H1 (cell line): ENCODE measurements at regions of chr1 and their contacts with region 1.

Region 1: DNA sequence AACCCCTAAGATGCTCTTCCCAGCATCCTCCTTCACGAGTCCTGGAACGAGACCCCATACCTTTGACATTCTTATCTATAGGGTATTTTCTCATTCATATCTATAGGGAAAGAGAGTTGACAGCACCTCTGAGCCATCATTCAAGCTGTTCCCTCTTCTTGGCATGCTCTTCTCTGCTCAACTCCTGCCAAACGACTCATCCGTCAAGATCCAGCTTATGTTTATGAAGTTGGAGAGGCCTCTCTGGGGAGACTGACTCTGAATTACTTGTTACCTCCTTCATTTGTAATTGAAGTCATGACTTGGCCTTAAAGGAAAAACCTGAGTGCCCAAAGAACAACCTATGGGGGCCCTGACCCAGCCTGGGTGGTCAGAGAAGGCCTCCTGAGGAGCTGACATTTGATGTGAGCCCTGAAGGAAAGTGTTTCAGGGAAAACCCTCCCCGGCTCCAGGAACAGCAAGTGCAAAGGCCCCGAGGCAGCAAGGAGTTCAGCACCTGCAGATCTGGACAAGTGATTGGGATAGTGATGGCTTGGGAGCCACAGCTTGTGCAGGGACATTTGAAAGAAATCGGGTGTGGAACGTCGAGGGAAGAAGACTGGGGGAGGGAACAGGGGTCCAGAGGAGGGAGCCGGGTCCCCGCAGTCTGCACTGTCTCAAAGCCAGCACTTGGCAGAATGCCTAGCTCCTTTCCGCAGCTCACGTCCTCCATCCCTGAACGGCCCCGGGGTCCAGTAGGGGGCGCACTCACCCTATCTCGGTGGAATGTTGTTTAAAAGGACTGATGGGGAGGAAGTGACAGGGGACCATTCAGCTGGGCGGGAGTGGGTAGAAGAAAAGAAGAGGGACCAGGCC is 14.0 kb upstream of the CDA start:
- DNase-seq: peak; percentile 72 to 99
- H3K4me3 ChIP-seq: no peak overlapping the region
- H3K27ac ChIP-seq: no peak overlapping the region
- H3K4me1 ChIP-seq: peaks cover 0 to 2% (median 0%) of the 10 kb centered on the region in 4 experiments; a peak in 2 of 7 replicates
- H3K27me3 ChIP-seq: peaks cover 0 to 6% (median 0%) of the 10 kb centered on the region in 4 experiments; a peak in 1 of 7 replicates
- CTCF ChIP-seq: peak; percentile 87 to 94 (median 91)
- EP300 ChIP-seq: no peak; a peak in 1 of 3 replicates
- POLR2A ChIP-seq: no peak
- RAD21 ChIP-seq: peak; percentile 92 to 95

Region 2: DNA sequence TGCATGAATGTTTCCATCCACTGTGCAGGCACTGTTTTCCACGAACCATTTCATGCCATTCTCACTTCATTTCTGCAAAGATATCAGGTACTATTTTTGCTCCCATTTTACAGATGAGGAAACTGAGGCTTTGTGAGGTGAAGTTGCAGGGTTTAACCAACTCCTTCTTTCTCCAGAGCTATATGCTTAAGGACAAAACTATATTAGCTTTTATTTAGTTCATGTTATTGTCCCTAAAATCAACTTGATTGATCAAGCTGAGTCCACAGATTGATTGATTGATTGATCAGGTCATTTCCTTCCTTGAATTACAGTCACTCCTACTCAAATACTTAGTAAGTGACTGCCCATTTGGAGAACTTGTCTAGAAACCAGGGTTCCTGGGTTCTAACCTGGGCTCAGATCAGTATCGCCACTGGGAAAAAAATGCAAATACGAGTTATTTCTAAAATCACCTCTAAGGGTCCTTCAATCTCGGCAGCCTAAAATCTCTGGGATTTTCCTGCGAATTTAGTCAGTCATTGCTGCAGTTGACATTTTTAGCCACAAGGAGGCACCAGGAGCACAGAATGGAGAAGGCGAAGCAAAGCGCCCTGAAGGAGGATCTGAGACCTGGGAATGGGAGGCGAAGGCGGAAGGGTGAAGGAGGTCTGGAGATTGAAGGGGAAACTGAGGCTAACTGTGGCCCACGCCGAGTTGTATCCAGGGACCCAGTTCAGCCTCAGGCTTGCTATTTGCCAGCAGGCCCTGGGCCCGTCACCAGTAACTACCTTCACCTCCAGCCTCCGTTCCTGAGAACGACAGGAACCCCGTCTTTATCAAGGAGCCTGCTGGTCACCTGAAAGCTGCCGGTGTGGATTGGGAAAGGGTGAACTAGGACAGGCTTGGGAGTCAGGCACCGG is 52.7 kb before region 1 on chr1:
- CTCF ChIA-PET with region 1: interaction called, 16 read pairs
- POLR2A ChIA-PET with region 1: no interaction called
- DNase-seq: peak; percentile 46 to 94
- H3K4me3 ChIP-seq: 0 out of 8 replicates have a peak overlapping the region, but pooled peaks of 1 of the 4 experiments have one; percentile 14
- H3K27ac ChIP-seq: no peak overlapping the region
- H3K4me1 ChIP-seq: peaks cover 0 to 1% (median 0%) of the 10 kb centered on the region in 4 experiments; a peak in 1 of 7 replicates
- H3K27me3 ChIP-seq: no peaks in the 10 kb centered on the region; a peak in 1 of 7 replicates
- CTCF ChIP-seq: peak; percentile 67 to 94 (median 92)
- EP300 ChIP-seq: no peak
- POLR2A ChIP-seq: no peak
- RAD21 ChIP-seq: peak; percentile 96 to 98

Region 3: DNA sequence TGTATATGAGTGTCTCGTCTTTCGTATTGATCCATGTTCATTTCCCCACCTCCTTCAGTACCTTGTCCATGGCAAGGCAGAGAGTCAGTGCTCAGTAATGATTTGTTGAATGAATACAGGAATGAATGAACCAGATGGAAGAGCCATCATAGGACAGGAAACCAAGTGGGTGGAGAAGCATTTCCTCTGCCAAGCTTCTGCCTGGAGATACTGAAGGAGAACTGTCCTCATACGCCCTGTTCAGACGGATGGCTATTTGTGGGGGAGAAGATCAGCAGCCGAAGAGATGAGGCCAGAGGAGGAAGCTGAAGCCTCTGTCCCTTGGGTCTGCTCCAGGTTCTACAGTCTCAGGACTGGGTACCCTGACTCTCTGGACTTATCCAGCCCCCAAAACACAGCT is 16.7 kb before region 1 on chr1:
- CTCF ChIA-PET with region 1: interaction called, 14 read pairs
- POLR2A ChIA-PET with region 1: no interaction called
- DNase-seq: no peak
- H3K4me3 ChIP-seq: no peak overlapping the region
- H3K27ac ChIP-seq: no peak overlapping the region
- H3K4me1 ChIP-seq: peaks cover 0 to 12% (median 4%) of the 10 kb centered on the region in 4 experiments; a peak in 4 of 7 replicates
- H3K27me3 ChIP-seq: peaks cover 17 to 36% (median 29%) of the 10 kb centered on the region in 4 experiments
- CTCF ChIP-seq: no peak
- EP300 ChIP-seq: no peak
- POLR2A ChIP-seq: no peak
- RAD21 ChIP-seq: no peak

Region 4: GRCh38 chr1:20589331-20590278 is 14.7 kb after region 1 on chr1:
- CTCF ChIA-PET with region 1: interaction called, 23 read pairs
- POLR2A ChIA-PET with region 1: no interaction called
- DNase-seq: no peak
- H3K4me3 ChIP-seq: peak overlapping the region in 1 of 4 experiments; percentile 30; a peak in 2 of 8 replicates
- H3K27ac ChIP-seq: no peak overlapping the region
- H3K4me1 ChIP-seq: peaks cover 0 to 16% (median 12%) of the 10 kb centered on the region in 4 experiments; a peak in 5 of 7 replicates
- H3K27me3 ChIP-seq: no peaks in the 10 kb centered on the region
- CTCF ChIP-seq: no peak
- EP300 ChIP-seq: no peak
- POLR2A ChIP-seq: no peak
- RAD21 ChIP-seq: no peak

Region 5: GRCh38 chr1:20633190-20634064 is 58.5 kb after region 1 on chr1 and contains the start of gene PINK1:
- CTCF ChIA-PET with region 1: interaction called, 85 read pairs
- POLR2A ChIA-PET with region 1: interaction called, 13 read pairs
- DNase-seq: peak; percentile 67 to 100
- H3K4me3 ChIP-seq: peak within 1 kb of the TSS; percentile 70 to 80 (median 75)
- H3K27ac ChIP-seq: no peak within 1 kb of the TSS; the same call in 1 of the 2 replicates
- H3K4me1 ChIP-seq: peaks cover 0 to 7% (median 0%) of the 10 kb centered on the region in 4 experiments; a peak in 2 of 7 replicates
- H3K27me3 ChIP-seq: peaks cover 0 to 5% (median 0%) of the 10 kb centered on the region in 4 experiments; a peak in 2 of 7 replicates
- CTCF ChIP-seq: peak; percentile 93 to 97 (median 93)
- EP300 ChIP-seq: no peak
- POLR2A ChIP-seq: no peak
- RAD21 ChIP-seq: peak; percentile 76 to 82
- total RNA-seq, gene PINK1: 19.3 and 20.5 TPM in 2 replicates

Region 6: DNA sequence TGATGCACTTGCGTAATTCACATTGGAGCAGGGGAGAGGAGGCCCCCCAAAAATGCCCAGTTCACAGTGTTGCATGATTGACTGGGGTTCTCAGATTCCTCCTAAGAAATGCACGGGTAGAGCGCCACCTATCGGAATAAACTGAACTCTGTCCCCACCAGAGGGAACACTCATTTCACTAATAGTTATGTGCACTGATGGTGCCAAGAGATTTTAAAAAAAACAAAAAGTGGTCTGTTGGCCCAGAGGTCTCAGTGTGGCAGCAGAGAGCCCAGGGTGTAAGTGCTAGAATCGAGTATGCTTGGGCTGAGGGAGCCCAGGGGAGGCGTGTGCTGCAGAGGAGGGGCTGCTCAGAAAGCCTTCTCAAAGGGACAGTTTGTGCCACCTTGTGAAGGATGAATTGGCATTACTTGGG is 65.3 kb after region 1 on chr1:
- CTCF ChIA-PET with region 1: interaction called, 85 read pairs
- POLR2A ChIA-PET with region 1: interaction called, 4 read pairs
- DNase-seq: peak in 1 of 2 experiments; percentile 72
- H3K4me3 ChIP-seq: no peak overlapping the region
- H3K27ac ChIP-seq: no peak overlapping the region
- H3K4me1 ChIP-seq: peaks cover 0 to 5% (median 3%) of the 10 kb centered on the region in 4 experiments; a peak in 3 of 7 replicates
- H3K27me3 ChIP-seq: no peaks in the 10 kb centered on the region
- CTCF ChIP-seq: peak; percentile 14 to 78 (median 77)
- EP300 ChIP-seq: no peak
- POLR2A ChIP-seq: no peak
- RAD21 ChIP-seq: peak; percentile 86 to 87